Activated CD4-positive, alpha-beta memory T cell treated with anti-CD3 and anti-CD28 coated beads for 36 hours (primary cell): ENCODE measurements at regions of chr10 and their contacts with region 1.

Region 1: GRCh38 chr10:124647421-124648130 is 96.6 kb downstream of the FAM53B start:
- DNase-seq: peak; percentile 87
- H3K4me3 Mint-ChIP-seq: peak overlapping the region; percentile 58
- H3K27ac Mint-ChIP-seq: peak overlapping the region; percentile 93
- H3K4me1 Mint-ChIP-seq: peaks cover 91% of the 10 kb centered on the region
- H3K27me3 Mint-ChIP-seq: no peaks in the 10 kb centered on the region

Region 2: GRCh38 chr10:123997486-123998199 is 649.9 kb before region 1 on chr10:
- CTCF ChIA-PET with region 1: no interaction called
- POLR2A ChIA-PET with region 1: no interaction called
- intact Hi-C with region 1: no loop called
- DNase-seq: no peak
- H3K4me3 Mint-ChIP-seq: no peak overlapping the region
- H3K27ac Mint-ChIP-seq: no peak overlapping the region
- H3K4me1 Mint-ChIP-seq: peaks cover 5% of the 10 kb centered on the region
- H3K27me3 Mint-ChIP-seq: peaks cover 37% of the 10 kb centered on the region

Region 3: GRCh38 chr10:124511205-124512039 is 136.2 kb before region 1 on chr10:
- CTCF ChIA-PET with region 1: no interaction called
- POLR2A ChIA-PET with region 1: no interaction called
- intact Hi-C with region 1: no loop called
- DNase-seq: peak; percentile 37
- H3K4me3 Mint-ChIP-seq: no peak overlapping the region
- H3K27ac Mint-ChIP-seq: no peak overlapping the region
- H3K4me1 Mint-ChIP-seq: peaks cover 4% of the 10 kb centered on the region
- H3K27me3 Mint-ChIP-seq: no peaks in the 10 kb centered on the region

Region 4: DNA sequence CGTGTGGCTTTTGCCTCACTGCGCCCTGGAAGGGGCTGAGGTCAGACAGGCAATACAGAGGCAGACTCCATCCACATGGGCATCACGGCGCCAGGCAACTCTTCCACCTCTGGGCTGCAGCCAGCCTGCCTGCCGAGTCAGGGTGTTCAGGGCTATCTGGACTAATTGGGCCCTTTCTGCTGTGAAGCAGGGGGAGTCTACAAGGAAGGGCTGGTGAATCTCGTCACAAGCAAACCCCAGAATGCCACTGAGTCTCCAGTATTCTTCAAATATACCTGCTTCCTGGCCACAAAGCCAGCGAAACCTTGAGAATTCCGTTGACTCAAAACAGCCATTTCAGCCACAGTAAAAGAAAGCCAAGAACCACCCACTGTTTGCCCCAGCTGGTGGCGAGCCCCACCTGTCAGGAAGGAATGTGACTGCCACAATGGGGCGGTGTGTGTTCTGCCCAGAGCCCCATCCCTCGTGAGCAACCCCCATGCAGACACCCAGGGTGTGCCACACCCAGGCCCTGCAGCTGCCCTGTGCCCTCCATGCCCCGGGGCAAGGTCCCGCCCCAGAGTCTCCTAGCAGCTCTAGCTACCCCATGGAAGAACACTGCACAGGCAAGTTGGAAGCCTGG is 20.7 kb before region 1 on chr10:
- CTCF ChIA-PET with region 1: interaction called, 9 read pairs
- POLR2A ChIA-PET with region 1: interaction called, 4 read pairs
- intact Hi-C with region 1: loop called (anchors 2 kb)
- DNase-seq: peak; percentile 80
- H3K4me3 Mint-ChIP-seq: no peak overlapping the region
- H3K27ac Mint-ChIP-seq: no peak overlapping the region
- H3K4me1 Mint-ChIP-seq: peaks cover 51% of the 10 kb centered on the region
- H3K27me3 Mint-ChIP-seq: no peaks in the 10 kb centered on the region

Region 5: DNA sequence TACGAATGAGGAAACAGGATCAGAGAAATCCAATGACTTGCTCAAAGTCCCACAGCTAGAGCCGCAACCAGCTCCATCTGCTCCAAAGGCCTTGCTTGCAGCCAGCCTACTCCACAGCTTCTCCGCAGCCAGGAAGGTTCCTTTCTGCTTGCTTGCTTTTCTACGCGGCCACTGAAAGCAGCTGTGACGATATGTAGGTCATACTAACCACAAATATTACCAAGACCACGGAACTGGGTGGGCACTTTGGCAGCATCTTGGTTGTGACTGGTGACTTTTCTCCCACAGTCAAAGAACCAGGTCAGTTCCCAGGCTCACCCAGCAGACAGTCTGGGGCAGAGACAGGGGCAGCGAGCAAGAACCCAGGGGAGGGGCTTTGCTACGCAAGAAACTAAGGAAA is 10.2 kb after region 1 on chr10:
- CTCF ChIA-PET with region 1: interaction called, 30 read pairs
- POLR2A ChIA-PET with region 1: interaction called, 3 read pairs
- intact Hi-C with region 1: no loop called
- DNase-seq: peak; percentile 58
- H3K4me3 Mint-ChIP-seq: peak overlapping the region; percentile 12
- H3K27ac Mint-ChIP-seq: peak overlapping the region; percentile 79
- H3K4me1 Mint-ChIP-seq: peaks cover 72% of the 10 kb centered on the region
- H3K27me3 Mint-ChIP-seq: no peaks in the 10 kb centered on the region

Region 6: GRCh38 chr10:124671486-124672075 is 24.0 kb after region 1 on chr10:
- CTCF ChIA-PET with region 1: interaction called, 10 read pairs
- POLR2A ChIA-PET with region 1: interaction called, 3 read pairs
- intact Hi-C with region 1: loop called (anchors 2 kb)
- DNase-seq: peak; percentile 48
- H3K4me3 Mint-ChIP-seq: no peak overlapping the region
- H3K27ac Mint-ChIP-seq: peak overlapping the region; percentile 83
- H3K4me1 Mint-ChIP-seq: peaks cover 89% of the 10 kb centered on the region
- H3K27me3 Mint-ChIP-seq: no peaks in the 10 kb centered on the region

Region 7: DNA sequence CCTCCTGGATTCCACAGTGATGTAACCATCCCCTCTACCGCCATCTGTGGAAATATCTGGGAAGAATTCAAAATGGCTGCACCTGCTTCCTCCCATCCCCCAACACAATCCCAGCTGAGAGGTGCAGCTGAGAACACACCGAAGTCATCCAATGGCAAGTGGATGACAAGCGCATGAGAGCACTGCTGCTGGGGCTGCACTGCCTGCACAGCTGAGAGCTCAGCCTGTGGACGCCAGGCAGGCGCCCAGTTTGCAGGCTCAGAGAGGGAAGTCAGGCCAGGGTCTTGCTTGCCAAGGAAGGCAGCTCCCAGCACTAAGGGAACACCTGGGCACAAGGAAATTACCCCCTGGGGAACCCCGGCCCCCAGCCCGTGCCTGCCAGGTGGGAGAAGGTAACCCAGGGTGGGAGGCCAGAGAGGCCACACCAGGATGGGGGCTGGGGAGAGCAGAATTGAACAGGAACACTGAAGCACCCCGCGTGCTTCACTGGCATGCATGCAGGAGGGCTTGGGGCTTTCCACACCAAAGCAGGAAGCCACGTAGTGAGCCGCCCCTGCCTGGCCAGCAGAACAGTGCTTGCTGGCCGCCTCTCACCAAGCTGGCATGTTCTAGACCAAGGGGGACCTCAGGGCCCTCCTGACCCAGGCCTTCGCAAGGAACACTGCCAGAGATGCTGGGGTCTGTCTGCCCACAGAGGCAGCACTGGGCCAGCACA is 50.4 kb after region 1 on chr10:
- CTCF ChIA-PET with region 1: interaction called, 12 read pairs
- POLR2A ChIA-PET with region 1: interaction called, 3 read pairs
- intact Hi-C with region 1: no loop called
- DNase-seq: peak; percentile 75
- H3K4me3 Mint-ChIP-seq: peak overlapping the region; percentile 26
- H3K27ac Mint-ChIP-seq: peak overlapping the region; percentile 97
- H3K4me1 Mint-ChIP-seq: peaks cover 100% of the 10 kb centered on the region
- H3K27me3 Mint-ChIP-seq: no peaks in the 10 kb centered on the region

Region 8: GRCh38 chr10:124732931-124733570 is 85.5 kb after region 1 on chr10:
- CTCF ChIA-PET with region 1: interaction called, 4 read pairs
- POLR2A ChIA-PET with region 1: interaction called, 4 read pairs
- intact Hi-C with region 1: loop called (anchors 2 kb)
- DNase-seq: peak; percentile 90
- H3K4me3 Mint-ChIP-seq: peak overlapping the region; percentile 69
- H3K27ac Mint-ChIP-seq: peak overlapping the region; percentile 91
- H3K4me1 Mint-ChIP-seq: peaks cover 91% of the 10 kb centered on the region
- H3K27me3 Mint-ChIP-seq: no peaks in the 10 kb centered on the region

Region 9: DNA sequence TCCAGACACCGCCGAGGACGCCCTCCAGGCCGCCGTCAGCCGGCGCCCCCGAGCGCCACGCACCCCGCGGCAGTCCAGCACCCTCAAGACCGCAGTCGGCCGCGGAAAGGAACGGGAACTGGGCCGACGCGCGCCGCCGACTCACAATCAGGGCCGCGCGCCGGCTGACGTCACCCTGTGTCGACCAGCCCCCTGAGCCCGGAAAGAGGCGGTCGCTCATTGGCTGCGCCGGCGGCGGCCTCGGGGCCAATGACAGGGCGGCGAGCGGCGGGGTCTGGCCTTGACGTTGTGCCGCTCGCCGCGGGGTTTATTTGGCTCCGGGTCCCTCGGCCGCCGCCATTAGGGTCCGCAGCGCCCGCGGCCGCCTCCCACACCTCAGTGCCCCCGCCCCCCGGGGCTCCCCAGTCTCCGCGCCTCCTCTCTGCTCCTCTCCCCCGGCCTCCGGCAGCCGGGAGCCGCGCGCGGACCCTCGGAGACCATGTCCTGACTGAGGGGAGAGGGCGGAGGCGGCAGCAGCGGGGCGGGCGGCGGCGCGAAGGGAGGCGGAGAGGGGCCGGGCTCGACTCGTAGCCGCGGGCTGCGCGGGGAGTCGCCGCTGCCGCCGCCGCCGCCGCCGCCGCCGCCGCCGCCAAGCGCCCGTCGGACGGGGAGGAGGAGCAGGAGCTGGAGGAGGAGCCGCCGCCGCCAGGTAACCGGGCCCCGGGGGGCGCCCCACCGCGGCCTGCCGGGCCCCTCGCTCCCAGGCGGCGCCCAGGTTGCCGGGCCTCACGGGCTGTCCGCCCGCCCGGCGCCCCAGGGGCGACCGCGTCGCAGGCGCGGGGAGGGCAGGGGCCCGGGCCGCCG is 269.2 kb after region 1 on chr10:
- CTCF ChIA-PET with region 1: no interaction called
- POLR2A ChIA-PET with region 1: no interaction called
- intact Hi-C with region 1: loop called (anchors 5 kb)
- DNase-seq: peak; percentile 97
- H3K4me3 Mint-ChIP-seq: peak overlapping the region; percentile 87
- H3K27ac Mint-ChIP-seq: peak overlapping the region; percentile 81
- H3K4me1 Mint-ChIP-seq: peaks cover 30% of the 10 kb centered on the region
- H3K27me3 Mint-ChIP-seq: no peaks in the 10 kb centered on the region